Naive thymus-derived CD8-positive, alpha-beta T cell (primary cell): ENCODE measurements at regions of chr5 and their contacts with region 1.

Region 1: GRCh38 chr5:173041881-173042762 is 14.0 kb upstream of the CREBRF start:
- DNase-seq: no peak
- ATAC-seq: no peak
- H3K4me3 Mint-ChIP-seq: no peak overlapping the region
- H3K27ac Mint-ChIP-seq: peak overlapping the region in 8 of 10 donors; percentile 6 to 87 (median 60)
- H3K4me1 Mint-ChIP-seq: peaks cover 10 to 28% (median 19%) of the 10 kb centered on the region in 4 donors
- H3K27me3 Mint-ChIP-seq: no peaks in the 10 kb centered on the region

Region 2: DNA sequence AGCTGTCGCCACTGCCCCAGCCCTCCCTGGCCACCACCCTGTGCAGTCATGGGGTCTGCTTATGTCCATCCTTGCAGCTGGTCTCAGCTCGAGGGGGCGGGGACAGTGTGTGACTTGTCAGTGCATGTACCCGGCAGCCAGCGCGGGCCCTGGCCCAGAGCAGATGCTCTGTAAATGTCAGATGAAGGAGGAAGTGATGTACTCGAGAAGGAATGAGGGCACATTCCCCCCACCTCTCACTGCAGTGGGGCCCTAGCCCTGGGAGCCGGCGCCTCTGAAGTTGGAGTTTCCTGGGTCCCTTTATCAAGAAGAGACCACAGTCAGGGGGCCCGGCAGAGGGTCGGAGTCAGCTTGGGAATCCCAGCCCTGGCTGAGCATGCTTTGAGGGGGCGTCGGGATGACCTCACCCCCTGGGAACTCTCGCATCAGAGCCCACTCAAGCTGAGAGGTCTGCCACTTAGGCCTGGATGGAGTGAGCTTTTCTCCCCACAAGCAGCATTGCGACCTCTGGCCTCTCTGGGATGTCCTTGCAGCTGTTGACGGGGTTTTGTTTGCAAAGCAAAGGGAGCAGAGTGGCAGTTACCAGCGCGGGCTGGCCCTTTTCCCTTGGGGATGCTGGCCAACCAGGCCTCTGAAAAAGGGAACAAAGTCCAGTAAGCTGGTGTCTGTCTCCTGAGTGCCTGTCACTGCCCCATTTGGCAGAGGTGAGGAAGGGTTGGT is 382.1 kb before region 1 on chr5:
- POLR2A ChIA-PET with region 1: no interaction called
- DNase-seq: no peak
- ATAC-seq: no peak
- H3K4me3 Mint-ChIP-seq: no peak overlapping the region
- H3K27ac Mint-ChIP-seq: no peak overlapping the region
- H3K4me1 Mint-ChIP-seq: no peaks in the 10 kb centered on the region
- H3K27me3 Mint-ChIP-seq: peaks cover 0 to 5% (median 0%) of the 10 kb centered on the region in 5 donors

Region 3: GRCh38 chr5:173016621-173017047 is 25.5 kb before region 1 on chr5:
- POLR2A ChIA-PET with region 1: no interaction called
- DNase-seq: no peak
- ATAC-seq: no peak
- H3K4me3 Mint-ChIP-seq: no peak overlapping the region
- H3K27ac Mint-ChIP-seq: peak overlapping the region; percentile 9 to 84 (median 64)
- H3K4me1 Mint-ChIP-seq: peaks cover 33 to 58% (median 56%) of the 10 kb centered on the region in 4 donors
- H3K27me3 Mint-ChIP-seq: no peaks in the 10 kb centered on the region

Region 4: GRCh38 chr5:173078878-173079277 is 36.8 kb after region 1 on chr5:
- POLR2A ChIA-PET with region 1: interaction called, 11 read pairs
- DNase-seq: no peak
- ATAC-seq: no peak
- H3K4me3 Mint-ChIP-seq: no peak overlapping the region
- H3K27ac Mint-ChIP-seq: peak overlapping the region in 2 of 10 donors; percentile 40 to 52
- H3K4me1 Mint-ChIP-seq: peaks cover 17 to 59% (median 49%) of the 10 kb centered on the region in 4 donors
- H3K27me3 Mint-ChIP-seq: no peaks in the 10 kb centered on the region

Region 5: GRCh38 chr5:173114536-173114935 is 72.4 kb after region 1 on chr5:
- POLR2A ChIA-PET with region 1: no interaction called
- DNase-seq: no peak
- ATAC-seq: no peak
- H3K4me3 Mint-ChIP-seq: no peak overlapping the region
- H3K27ac Mint-ChIP-seq: peak overlapping the region in 2 of 10 donors; percentile 17 to 52
- H3K4me1 Mint-ChIP-seq: peaks cover 0 to 2% (median 0%) of the 10 kb centered on the region in 4 donors
- H3K27me3 Mint-ChIP-seq: no peaks in the 10 kb centered on the region